ENCODE measurements at regions of chr20 and their contacts with region 1.

Region 1: DNA sequence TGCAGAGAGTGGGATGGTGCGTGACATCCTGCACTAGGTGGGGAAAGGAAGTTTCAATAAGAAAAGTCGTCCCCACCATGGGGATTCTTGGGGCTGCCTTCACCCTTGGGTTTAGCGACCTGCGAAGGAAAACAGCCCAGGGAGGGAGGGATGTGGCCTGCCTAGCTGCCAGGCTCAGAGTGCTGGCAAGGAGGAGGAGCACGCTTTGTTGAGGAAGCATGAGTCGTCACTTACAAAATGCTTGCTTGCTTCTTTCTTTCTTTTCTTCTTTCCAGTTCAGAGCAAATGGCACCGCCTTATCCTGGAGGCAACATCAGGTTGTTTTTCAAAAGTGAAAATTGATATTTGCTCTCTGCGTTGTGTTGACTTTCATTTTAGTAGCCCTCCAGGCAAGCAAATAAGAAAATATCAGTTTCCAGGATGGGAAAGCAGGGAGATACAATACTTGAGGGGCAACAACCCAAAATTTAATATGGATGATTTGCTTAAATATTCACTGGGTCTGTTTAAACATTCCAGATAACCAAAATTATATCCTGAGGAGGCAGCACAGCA is 123.2 kb downstream of the TFAP2C start:
- DNase-seq: no peak
- H3K4me3 ChIP-seq: no peak overlapping the region
- H3K27me3 ChIP-seq: peaks cover 3% of the 10 kb centered on the region; the same call in 1 of the 2 replicates
- CTCF ChIP-seq: no peak

Region 2: DNA sequence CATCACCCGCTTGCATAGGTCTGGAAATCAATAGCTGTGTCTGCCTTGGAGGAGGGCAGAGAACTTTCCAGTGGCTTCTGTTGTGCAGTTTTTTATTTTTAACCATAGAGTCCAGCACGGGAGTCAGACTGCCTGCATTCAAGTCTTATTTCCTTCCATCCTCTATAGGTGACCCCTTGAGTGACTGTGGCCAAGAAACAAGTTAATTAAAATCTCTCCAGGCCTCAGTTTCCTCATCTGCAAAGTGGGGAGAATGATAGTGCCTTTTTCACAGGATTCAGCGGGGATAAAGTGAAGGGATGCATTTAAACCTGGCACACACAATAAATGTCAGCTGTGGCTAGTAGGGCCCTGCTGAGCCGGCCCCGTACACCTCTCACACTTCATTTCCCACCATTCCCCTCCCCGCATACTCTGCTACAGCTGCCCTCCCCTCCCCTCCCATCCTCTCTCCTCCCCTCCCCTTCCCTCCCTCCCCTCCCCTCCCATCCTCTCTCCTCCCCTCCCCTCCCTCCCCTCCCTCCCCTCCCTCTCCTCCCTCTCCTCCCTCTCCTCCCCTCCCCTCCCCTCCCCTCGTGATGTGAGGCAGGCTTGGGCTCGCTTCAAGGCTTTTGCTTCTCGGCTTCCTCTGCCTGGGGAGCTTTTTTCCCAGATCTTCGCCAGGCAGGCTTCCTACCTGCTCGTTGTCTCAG is 27.2 kb after region 1 on chr20:
- CTCF ChIA-PET with region 1: no interaction called
- POLR2A ChIA-PET with region 1: interaction called, 15 read pairs
- DNase-seq: no peak
- H3K4me3 ChIP-seq: no peak overlapping the region
- H3K27me3 ChIP-seq: no peaks in the 10 kb centered on the region
- CTCF ChIP-seq: no peak

Region 3: GRCh38 chr20:56859040-56859800 is 106.9 kb after region 1 on chr20:
- CTCF ChIA-PET with region 1: no interaction called
- POLR2A ChIA-PET with region 1: no interaction called
- DNase-seq: no peak
- H3K4me3 ChIP-seq: no peak overlapping the region
- H3K27me3 ChIP-seq: peaks cover 15% of the 10 kb centered on the region
- CTCF ChIP-seq: no peak

Measured in BJ (cell line).